ENCODE measurements at regions of chr6 and their contacts with region 1.

Region 1: GRCh38 chr6:105109955-105110895 is 69.6 kb downstream of the POPDC3 start:
- DNase-seq: no peak
- CTCF ChIP-seq: no peak

Region 2: DNA sequence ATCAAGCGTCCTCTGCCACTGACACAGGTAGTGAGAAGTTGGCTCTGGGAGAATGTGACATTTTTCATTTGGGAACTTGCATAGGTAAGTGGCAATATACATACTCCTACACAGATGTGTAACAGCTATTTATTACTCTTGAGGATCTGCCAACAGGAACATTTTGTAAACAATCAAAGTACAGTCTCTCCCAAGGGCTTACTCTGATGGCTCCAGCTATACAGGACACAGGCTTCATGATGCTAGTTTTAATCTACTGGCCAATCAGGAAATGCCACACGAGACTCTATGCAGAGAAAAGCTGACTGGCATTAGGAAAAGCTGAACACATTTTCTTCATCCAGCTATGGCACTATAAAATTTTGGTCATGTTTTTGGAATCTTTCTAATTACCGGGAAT is 11.8 kb after region 1 on chr6:
- CTCF ChIA-PET with region 1: interaction called, 13 read pairs
- POLR2A ChIA-PET with region 1: no interaction called
- DNase-seq: no peak
- CTCF ChIP-seq: no peak

Measured in GM10248 (cell line).